Activated CD4-positive, alpha-beta memory T cell treated with anti-CD3 and anti-CD28 coated beads, Interleukin-2, amount 10 ng/mL, durations not matched to agents 7 days and 5 days (primary cell): ENCODE measurements at regions of chr1 and their contacts with region 1.

Region 1: GRCh38 chr1:244272471-244273261 is 179.0 kb downstream of the ADSS2 start:
- DNase-seq: peak; percentile 76
- H3K4me3 Mint-ChIP-seq: no peak overlapping the region
- H3K27ac Mint-ChIP-seq: no peak overlapping the region
- H3K4me1 Mint-ChIP-seq: peaks cover 11% of the 10 kb centered on the region
- H3K27me3 Mint-ChIP-seq: peaks cover 1% of the 10 kb centered on the region

Region 2: DNA sequence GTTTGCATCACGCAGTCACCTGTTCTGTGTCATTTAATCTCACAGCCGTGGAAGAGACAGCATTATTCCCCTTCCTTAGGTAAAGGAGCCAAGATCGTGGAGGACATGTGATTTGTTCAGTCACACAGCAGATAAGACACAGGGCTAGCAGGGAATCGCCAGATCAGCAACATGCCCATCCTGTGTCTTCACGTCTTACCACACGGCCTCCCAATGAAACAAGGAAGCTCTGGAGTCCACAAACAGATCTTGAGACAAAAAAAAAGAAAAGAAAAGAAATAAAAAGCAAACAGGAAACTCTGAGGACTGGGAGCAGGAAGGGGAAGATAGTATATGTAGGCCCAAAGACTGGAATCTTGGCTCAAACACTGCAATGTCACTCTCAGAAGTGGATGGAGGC is 23.8 kb after region 1 on chr1:
- CTCF ChIA-PET with region 1: interaction called, 34 read pairs
- POLR2A ChIA-PET with region 1: no interaction called
- DNase-seq: no peak
- H3K4me3 Mint-ChIP-seq: no peak overlapping the region
- H3K27ac Mint-ChIP-seq: no peak overlapping the region
- H3K4me1 Mint-ChIP-seq: peaks cover 14% of the 10 kb centered on the region
- H3K27me3 Mint-ChIP-seq: no peaks in the 10 kb centered on the region

Region 3: DNA sequence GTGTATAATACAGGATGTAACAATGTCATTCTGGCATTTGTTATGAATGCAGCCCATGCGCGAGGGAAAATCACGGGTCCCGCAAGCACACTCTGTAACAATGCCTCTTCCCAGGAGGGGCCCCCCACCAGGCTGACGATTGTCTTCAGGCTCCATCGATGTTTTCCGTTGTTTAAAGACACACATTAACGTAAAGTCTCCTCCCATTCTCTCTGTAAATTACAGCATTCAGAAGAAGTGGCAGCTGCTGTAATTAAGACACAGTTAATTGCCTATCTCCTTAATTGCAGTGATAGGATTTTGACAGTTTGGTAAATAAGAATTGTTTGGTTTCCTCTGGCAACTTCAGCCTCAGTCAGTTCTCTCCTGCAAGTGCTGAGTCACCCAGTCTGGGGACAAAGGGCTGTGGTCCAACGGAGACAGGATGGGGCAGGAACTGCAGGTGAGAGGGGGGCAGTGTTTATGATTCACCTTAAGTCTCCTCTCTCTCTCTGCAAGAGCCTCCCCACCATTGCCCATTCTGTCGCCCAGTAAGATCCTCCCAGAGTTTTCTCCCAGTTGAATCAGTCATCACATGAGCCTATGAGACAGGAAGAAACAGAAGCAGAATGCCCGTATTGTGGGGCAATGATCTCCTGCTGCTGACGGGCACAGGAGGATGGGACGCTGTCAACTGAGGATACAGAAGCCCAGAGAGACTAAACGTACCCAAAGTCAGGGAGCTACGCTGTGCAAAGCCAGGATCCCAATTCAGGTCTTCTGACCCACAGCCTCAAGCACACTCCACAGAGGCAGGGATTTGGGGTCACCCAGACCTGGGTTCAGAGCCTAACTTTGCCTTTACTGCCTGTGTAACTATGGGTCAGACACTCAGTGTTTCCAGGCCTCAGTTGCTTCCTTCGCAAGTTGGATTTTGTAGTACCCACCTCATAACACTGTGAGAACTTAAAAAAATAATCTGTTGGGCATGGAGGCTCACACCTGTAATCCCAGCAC is 69.1 kb after region 1 on chr1:
- CTCF ChIA-PET with region 1: no interaction called
- POLR2A ChIA-PET with region 1: no interaction called
- DNase-seq: peak; percentile 48
- H3K4me3 Mint-ChIP-seq: no peak overlapping the region
- H3K27ac Mint-ChIP-seq: peak overlapping the region; percentile 53
- H3K4me1 Mint-ChIP-seq: peaks cover 13% of the 10 kb centered on the region
- H3K27me3 Mint-ChIP-seq: peaks cover 3% of the 10 kb centered on the region